ENCODE measurements at regions of chr17 and their contacts with region 1.

Region 1: GRCh38 chr17:4986951-4987766 is at the start of gene CAMTA2:
- DNase-seq: peak; percentile 94
- H3K4me3 ChIP-seq: peak within 1 kb of the TSS; percentile 83 to 96
- H3K27ac ChIP-seq: peak within 1 kb of the TSS; percentile 41 to 74; a peak in 2 of 4 replicates
- H3K4me1 ChIP-seq: peaks cover 7 to 18% of the 10 kb centered on the region in 2 experiments; a peak in 2 of 4 replicates
- H3K27me3 ChIP-seq: no peaks in the 10 kb centered on the region
- CTCF ChIP-seq: peak; percentile 80
- EP300 ChIP-seq: no peak
- RAD21 ChIP-seq: peak; percentile 30
- polyA plus RNA-seq, gene CAMTA2: 18.4 and 27.0 TPM in 2 replicates

Region 2: DNA sequence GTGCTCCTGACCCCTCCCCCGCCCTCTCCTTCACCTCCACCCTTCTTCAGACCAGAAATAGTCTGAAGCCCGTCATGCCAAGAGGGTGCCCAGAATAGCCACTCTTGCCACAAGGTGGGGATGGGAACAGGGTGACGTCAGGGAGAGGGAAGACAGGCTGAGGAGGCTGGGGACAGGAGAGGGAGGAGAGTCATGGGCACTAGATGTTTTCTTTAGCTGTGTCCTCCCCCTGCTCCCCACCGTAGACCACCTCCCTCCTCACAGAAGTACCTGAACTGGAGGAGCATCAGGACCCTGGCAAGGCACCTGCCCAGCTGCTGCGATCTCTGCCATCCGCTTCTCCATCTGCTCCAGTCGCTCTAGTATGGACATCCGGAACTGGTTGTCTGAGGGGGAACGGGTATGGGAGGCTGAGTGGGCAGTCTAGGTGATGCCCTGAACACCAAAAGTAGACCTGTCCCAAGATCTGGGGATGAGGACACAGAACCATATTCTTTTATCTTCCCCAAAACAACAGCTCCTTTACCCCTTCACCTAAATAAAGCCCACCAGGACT is 13.0 kb before region 1 on chr17:
- CTCF ChIA-PET with region 1: interaction called, 39 read pairs
- POLR2A ChIA-PET with region 1: interaction called, 3 read pairs
- DNase-seq: no peak
- H3K4me3 ChIP-seq: no peak overlapping the region
- H3K27ac ChIP-seq: no peak overlapping the region
- H3K4me1 ChIP-seq: peaks cover 9 to 10% of the 10 kb centered on the region in 2 experiments; a peak in 2 of 4 replicates
- H3K27me3 ChIP-seq: no peaks in the 10 kb centered on the region
- CTCF ChIP-seq: no peak
- EP300 ChIP-seq: no peak
- RAD21 ChIP-seq: no peak

Region 3: GRCh38 chr17:4997302-4998026 is 10.3 kb after region 1 on chr17 and contains the starts of genes INCA1 and KIF1C:
- CTCF ChIA-PET with region 1: interaction called, 54 read pairs
- POLR2A ChIA-PET with region 1: interaction called, 5 read pairs
- DNase-seq: peak; percentile 99
- H3K4me3 ChIP-seq: peak within 1 kb of the TSS; percentile 93 to 99
- H3K27ac ChIP-seq: peak within 1 kb of the TSS; percentile 66 to 85; a peak in 3 of 4 replicates
- H3K4me1 ChIP-seq: peaks cover 10 to 24% of the 10 kb centered on the region in 2 experiments; a peak in 3 of 4 replicates
- H3K27me3 ChIP-seq: no peaks in the 10 kb centered on the region
- CTCF ChIP-seq: no peak
- EP300 ChIP-seq: no peak
- RAD21 ChIP-seq: no peak
- polyA plus RNA-seq, gene INCA1: 1.2 and 1.3 TPM in 2 replicates
- polyA plus RNA-seq, gene KIF1C: 36.7 and 58.2 TPM in 2 replicates

Region 4: DNA sequence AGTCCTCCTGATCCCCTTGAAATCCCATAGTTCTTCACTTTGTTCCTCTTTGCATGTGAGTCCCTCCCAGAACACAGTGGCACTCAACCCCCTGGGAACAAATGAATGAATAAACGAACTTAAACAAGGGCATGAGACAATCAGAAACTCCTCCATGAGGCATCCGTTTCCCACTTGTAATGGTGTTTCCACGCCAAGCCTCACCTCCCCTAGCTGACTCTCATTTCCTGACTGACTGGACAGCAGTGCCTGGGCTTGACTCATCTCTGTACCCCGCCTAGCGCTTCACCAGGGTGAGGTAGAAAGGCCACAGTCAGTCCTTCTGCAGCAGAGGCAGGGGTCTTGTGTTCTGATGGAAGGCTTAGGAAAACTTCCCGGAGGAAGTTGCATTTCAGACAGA is 24.8 kb after region 1 on chr17:
- CTCF ChIA-PET with region 1: interaction called, 10 read pairs
- POLR2A ChIA-PET with region 1: no interaction called
- DNase-seq: no peak
- H3K4me3 ChIP-seq: no peak overlapping the region
- H3K27ac ChIP-seq: no peak overlapping the region
- H3K4me1 ChIP-seq: no peaks in the 10 kb centered on the region
- H3K27me3 ChIP-seq: no peaks in the 10 kb centered on the region
- CTCF ChIP-seq: no peak
- EP300 ChIP-seq: no peak
- RAD21 ChIP-seq: no peak

Region 5: DNA sequence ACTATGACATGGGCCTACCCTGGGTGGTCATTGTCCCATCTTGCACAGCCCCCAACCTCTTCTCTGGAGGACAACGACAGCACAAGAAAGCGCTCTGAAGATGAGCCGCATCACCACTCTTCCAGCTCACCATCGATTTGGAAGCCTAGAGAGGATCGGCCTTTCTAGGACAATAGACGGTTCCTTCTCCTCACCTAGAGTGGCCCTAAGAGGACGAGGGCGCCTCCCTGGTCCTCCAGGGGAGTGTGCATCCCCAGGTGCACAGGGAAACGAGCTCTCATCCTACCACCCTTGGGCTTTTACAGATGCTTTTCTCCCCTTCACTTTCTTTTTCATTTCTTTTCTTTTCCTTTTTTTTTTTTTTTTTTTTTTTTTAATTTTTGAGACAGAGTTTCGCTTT is 68.4 kb after region 1 on chr17:
- CTCF ChIA-PET with region 1: interaction called, 29 read pairs
- POLR2A ChIA-PET with region 1: interaction called, 3 read pairs
- DNase-seq: peak; percentile 22
- H3K4me3 ChIP-seq: no peak overlapping the region
- H3K27ac ChIP-seq: no peak overlapping the region
- H3K4me1 ChIP-seq: no peaks in the 10 kb centered on the region
- H3K27me3 ChIP-seq: no peaks in the 10 kb centered on the region
- CTCF ChIP-seq: no peak
- EP300 ChIP-seq: no peak
- RAD21 ChIP-seq: no peak